WTC11 (cell line): ENCODE measurements at regions of chr11 and their contacts with region 1.

Region 1: GRCh38 chr11:8964324-8965320 is at the start of gene TMEM9B:
- DNase-seq: peak; percentile 86
- ATAC-seq: peak; percentile 80
- H3K4me3 Mint-ChIP-seq: peak within 1 kb of the TSS; percentile 94
- H3K27ac Mint-ChIP-seq: peak within 1 kb of the TSS; percentile 89
- H3K4me1 Mint-ChIP-seq: peaks cover 19% of the 10 kb centered on the region
- H3K27me3 Mint-ChIP-seq: no peaks in the 10 kb centered on the region
- CTCF ChIP-seq: no peak
- total RNA-seq, gene TMEM9B: 8.7 to 10.2 TPM (median 8.9 TPM) in 3 replicates

Region 2: DNA sequence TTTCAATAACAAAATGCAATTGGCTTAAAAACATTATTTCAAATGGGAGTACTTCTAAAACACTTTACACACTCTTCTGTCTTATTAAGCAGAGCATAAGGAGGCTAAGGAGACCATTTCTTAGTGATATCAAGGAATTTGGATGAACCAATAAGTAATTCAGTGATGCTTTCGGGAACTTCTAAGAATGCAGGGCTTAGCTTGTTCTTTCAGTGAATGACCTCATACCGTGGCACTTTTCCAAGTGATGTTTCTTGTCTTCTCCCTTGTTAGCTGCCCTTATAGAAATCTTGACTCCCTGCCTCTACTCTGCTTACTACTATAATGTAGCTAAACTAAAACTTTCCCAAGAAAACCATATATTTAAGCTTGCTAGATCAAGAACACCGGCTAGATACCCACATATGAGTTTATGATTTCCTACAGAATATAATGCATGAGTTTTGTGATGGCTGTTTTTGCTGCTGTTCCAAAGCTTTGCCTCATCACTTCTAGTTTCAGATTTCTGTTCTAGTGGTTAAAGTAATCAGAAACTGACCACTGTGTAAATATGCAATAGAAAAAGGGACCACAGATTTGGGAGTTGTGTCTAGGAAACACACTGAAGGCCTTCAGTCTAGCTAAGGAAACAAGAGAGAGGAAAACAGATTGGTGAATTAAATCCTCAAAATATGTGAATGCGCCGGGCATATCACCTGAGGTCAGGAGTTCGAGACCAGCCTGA is 333.1 kb before region 1 on chr11:
- CTCF ChIA-PET with region 1: no interaction called
- POLR2A ChIA-PET with region 1: no interaction called
- DNase-seq: no peak
- ATAC-seq: no peak
- H3K4me3 Mint-ChIP-seq: no peak overlapping the region
- H3K27ac Mint-ChIP-seq: no peak overlapping the region
- H3K4me1 Mint-ChIP-seq: no peaks in the 10 kb centered on the region
- H3K27me3 Mint-ChIP-seq: no peaks in the 10 kb centered on the region
- CTCF ChIP-seq: no peak

Region 3: GRCh38 chr11:8688414-8689362 is 275.9 kb before region 1 on chr11:
- CTCF ChIA-PET with region 1: interaction called, 11 read pairs
- POLR2A ChIA-PET with region 1: interaction called, 4 read pairs
- DNase-seq: peak; percentile 95
- ATAC-seq: peak; percentile 79
- H3K4me3 Mint-ChIP-seq: peak overlapping the region; percentile 88
- H3K27ac Mint-ChIP-seq: peak overlapping the region; percentile 99
- H3K4me1 Mint-ChIP-seq: peaks cover 59% of the 10 kb centered on the region
- H3K27me3 Mint-ChIP-seq: no peaks in the 10 kb centered on the region
- CTCF ChIP-seq: no peak

Region 4: DNA sequence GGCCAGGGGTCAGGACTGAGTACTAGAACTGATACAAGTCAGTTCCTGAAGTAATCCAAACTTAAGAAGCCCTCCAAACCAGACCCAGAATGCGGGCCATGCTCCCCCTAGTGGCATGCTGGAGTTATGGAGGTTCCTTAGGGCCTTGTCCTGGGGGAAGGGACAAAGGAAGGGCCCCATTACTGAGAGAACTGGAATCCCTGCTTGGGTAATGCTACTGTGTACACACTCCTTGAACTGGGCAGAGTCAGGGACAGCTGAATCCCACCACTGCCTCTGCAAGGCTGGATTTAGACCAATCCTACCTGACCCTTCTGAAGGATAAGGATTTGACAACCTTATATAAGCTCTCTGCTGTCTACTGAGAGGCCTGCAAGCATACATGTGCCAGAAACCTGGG is 151.0 kb before region 1 on chr11:
- CTCF ChIA-PET with region 1: interaction called, 21 read pairs
- POLR2A ChIA-PET with region 1: interaction called, 3 read pairs
- DNase-seq: peak; percentile 89
- ATAC-seq: peak; percentile 80
- H3K4me3 Mint-ChIP-seq: no peak overlapping the region
- H3K27ac Mint-ChIP-seq: no peak overlapping the region
- H3K4me1 Mint-ChIP-seq: peaks cover 25% of the 10 kb centered on the region
- H3K27me3 Mint-ChIP-seq: no peaks in the 10 kb centered on the region
- CTCF ChIP-seq: peak; percentile 93

Region 5: DNA sequence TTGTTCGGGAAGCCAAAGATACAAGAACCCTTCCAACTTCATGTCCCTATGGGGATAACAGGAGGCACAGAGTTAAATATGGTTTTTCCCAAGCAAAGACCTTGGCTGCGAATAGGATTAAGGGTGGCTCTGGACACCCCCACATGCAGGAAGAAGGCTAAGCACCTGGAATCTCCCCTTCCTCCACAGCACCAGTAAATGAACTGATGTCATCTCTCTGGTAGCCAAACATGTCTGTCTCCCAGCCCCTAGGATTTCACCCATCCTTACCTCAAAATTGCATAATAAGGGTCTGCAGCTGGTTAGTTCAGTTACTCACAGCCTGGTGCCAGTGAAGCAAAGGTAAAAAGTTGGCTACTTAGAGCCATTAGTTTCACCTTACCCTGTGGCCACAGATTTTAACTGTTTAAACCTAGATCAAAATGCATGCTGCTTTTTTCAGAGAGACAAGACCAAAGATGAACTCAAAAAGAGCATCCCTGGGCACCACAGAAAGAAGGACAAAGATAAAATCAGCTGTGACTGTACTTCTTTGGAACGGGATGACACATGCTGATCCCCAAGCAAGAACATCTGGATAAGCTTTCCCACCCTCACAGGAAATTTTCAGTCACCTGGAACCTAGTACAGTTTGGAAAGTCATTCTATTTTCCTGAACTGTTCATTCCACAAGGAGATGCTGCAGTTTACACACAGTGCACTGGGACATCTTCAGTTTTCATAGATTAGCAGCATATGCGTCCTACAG is 130.9 kb before region 1 on chr11:
- CTCF ChIA-PET with region 1: interaction called, 11 read pairs
- POLR2A ChIA-PET with region 1: no interaction called
- DNase-seq: no peak
- ATAC-seq: no peak; the same call in 1 of the 2 replicates
- H3K4me3 Mint-ChIP-seq: no peak overlapping the region
- H3K27ac Mint-ChIP-seq: 0 out of 2 replicates have a peak overlapping the region, but pooled peaks have one; percentile 28
- H3K4me1 Mint-ChIP-seq: peaks cover 29% of the 10 kb centered on the region
- H3K27me3 Mint-ChIP-seq: no peaks in the 10 kb centered on the region
- CTCF ChIP-seq: no peak

Region 6: GRCh38 chr11:8911029-8911826 is 53.4 kb before region 1 on chr11 and contains the start of gene AKIP1:
- CTCF ChIA-PET with region 1: interaction called, 110 read pairs
- POLR2A ChIA-PET with region 1: interaction called, 5 read pairs
- DNase-seq: peak; percentile 98
- ATAC-seq: peak; percentile 92
- H3K4me3 Mint-ChIP-seq: peak within 1 kb of the TSS; percentile 84
- H3K27ac Mint-ChIP-seq: peak within 1 kb of the TSS; percentile 68; the same call in 1 of the 2 replicates
- H3K4me1 Mint-ChIP-seq: peaks cover 29% of the 10 kb centered on the region
- H3K27me3 Mint-ChIP-seq: peaks cover 28% of the 10 kb centered on the region
- CTCF ChIP-seq: no peak
- total RNA-seq, gene AKIP1: 21.1 to 26.0 TPM (median 22.0 TPM) in 3 replicates

Region 7: GRCh38 chr11:8934749-8935478 is 29.7 kb before region 1 on chr11:
- CTCF ChIA-PET with region 1: interaction called, 55 read pairs
- POLR2A ChIA-PET with region 1: interaction called, 3 read pairs
- DNase-seq: no peak
- ATAC-seq: no peak
- H3K4me3 Mint-ChIP-seq: no peak overlapping the region
- H3K27ac Mint-ChIP-seq: no peak overlapping the region
- H3K4me1 Mint-ChIP-seq: peaks cover 25% of the 10 kb centered on the region
- H3K27me3 Mint-ChIP-seq: no peaks in the 10 kb centered on the region
- CTCF ChIP-seq: no peak

Region 8: DNA sequence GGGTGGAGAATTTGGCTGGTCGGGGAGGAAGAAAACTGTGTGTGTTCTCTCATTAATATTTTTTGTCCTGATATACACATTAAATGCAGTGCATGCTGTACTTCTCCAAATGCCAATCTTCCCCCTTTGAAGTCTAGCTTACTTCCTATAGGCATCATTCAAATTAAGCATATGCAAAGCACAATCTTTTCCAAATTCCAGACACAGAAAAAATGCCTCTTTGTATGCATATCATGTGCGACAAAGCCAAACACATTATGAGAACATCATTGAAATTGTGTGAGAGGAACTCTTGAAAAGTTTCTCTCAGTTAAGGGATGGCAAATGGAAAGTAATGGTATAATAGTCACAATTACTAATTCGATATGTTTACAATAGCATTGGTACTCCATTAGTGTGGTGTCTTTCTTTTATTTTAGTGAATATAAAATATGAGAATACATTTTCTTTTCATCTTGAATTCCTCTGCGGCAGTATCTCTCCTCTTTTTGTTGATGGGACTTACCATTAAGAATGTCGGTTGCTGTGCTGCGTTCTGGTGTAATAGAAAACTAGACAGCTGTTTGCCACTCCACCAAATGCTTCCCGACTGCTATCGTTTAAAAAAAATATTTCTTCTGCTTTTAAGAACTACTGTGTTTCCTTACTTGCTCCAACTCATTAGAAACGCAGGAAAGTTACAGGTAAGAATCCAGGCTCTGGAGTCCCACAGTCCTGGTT is 58.5 kb after region 1 on chr11:
- CTCF ChIA-PET with region 1: no interaction called
- POLR2A ChIA-PET with region 1: no interaction called
- DNase-seq: no peak
- ATAC-seq: no peak
- H3K4me3 Mint-ChIP-seq: no peak overlapping the region
- H3K27ac Mint-ChIP-seq: no peak overlapping the region
- H3K4me1 Mint-ChIP-seq: peaks cover 8% of the 10 kb centered on the region
- H3K27me3 Mint-ChIP-seq: no peaks in the 10 kb centered on the region
- CTCF ChIP-seq: no peak

Region 9: DNA sequence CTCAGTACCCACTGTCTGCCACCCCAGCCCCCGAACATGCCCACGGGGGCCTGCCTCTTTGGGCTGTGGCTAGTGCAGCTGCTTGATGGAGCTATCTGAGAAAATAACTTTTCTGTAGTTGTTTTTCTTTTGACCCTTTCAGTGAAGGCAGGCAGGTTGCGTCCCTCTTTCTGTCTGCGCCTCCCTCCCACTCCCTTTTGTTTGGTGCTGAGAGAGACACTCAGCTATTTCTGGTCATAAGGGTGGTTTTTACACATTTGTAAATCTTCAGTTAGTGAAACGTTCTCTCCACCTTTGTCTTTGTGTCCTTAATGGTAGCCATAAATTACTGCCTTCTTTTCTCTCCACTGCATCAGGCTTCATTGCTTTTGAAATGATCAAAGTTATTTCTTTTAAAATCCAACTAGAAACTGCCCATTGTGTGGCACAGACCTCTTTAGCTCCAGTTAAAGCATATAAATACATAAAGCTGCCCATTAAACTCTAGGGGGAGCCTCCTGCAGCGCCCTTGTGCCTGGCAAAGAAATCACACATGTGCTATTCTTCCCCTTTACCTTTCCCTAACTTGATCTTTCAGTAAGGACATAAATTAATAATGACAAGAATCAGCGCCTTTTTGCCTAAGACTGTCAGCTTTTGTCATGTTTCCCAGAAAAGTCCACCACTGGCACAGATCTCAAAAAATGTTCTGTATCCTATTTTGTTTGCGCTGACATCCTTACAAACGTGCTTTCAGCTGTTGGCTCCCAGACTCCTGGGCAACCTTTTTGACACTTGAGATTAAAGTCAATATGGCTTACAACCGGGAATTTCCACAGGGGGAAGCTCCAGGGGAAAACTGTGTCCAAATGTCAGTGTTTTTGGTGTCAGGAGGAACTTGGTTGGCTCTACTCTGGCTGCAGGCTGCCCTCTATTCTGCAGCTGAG is 128.5 kb after region 1 on chr11:
- CTCF ChIA-PET with region 1: interaction called, 10 read pairs
- POLR2A ChIA-PET with region 1: no interaction called
- DNase-seq: no peak
- ATAC-seq: no peak
- H3K4me3 Mint-ChIP-seq: peak overlapping the region; percentile 58
- H3K27ac Mint-ChIP-seq: no peak overlapping the region
- H3K4me1 Mint-ChIP-seq: peaks cover 12% of the 10 kb centered on the region
- H3K27me3 Mint-ChIP-seq: peaks cover 49% of the 10 kb centered on the region
- CTCF ChIP-seq: no peak